Ascending aorta (tissue), 2 donors: ENCODE measurements at regions of chr1 and their contacts with region 1.

Region 1: DNA sequence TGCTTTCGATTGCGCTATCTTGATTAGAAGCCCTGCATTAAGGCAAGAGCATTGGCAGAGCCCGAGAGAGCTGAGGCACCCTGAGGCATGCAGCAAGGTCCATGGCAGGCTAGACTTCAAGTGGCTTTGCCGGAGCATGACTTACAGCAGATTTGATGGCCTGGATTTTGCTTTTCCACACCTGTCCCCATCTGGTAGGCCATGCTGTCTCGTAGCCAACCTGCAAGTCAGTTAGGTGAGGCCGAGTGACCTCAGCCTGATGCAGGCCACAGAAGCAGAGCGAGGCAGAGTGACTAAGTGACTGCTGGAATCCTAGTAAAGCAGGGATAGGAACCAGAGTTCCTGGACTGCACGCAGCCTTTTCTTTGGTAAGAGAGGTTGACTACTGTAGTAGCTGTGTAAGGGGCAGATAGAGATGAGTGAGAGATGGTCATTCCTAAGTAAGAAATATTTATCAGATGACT is 148.9 kb downstream of the PBX1 start:
- DNase-seq: peak; percentile 39 to 77
- H3K4me3 ChIP-seq: no peak overlapping the region
- H3K27ac ChIP-seq: peak overlapping the region; percentile 48 to 77
- H3K4me1 ChIP-seq: peaks cover 0 to 41% of the 10 kb centered on the region in 2 donors
- H3K27me3 ChIP-seq: no peaks in the 10 kb centered on the region
- CTCF ChIP-seq: no peak

Region 2: DNA sequence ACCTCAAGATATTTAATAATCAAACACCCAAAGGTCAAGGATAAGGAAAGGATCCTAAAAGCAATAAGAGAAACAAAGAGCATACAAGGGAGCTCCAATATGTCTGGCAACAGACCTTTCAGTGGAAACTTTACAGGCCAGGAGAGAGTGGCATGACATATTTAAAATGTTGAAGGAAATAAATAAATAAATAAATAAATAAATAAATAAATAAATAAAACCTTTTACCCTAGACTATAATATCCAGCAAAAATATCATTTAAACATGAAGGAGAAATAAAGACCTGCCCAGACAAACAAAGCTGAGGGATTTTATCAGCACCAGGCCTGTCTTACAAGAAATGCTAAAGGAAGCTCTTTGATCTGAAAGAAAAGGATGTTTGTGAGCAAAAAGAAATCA is 516.7 kb before region 1 on chr1:
- intact Hi-C with region 1: no loop called
- DNase-seq: no peak
- H3K4me3 ChIP-seq: no peak overlapping the region
- H3K27ac ChIP-seq: no peak overlapping the region
- H3K4me1 ChIP-seq: no peaks in the 10 kb centered on the region
- H3K27me3 ChIP-seq: no peaks in the 10 kb centered on the region
- CTCF ChIP-seq: no peak

Region 3: GRCh38 chr1:164644774-164645235 is 63.1 kb before region 1 on chr1:
- intact Hi-C with region 1: loop called (anchors 5 kb)
- DNase-seq: no peak
- H3K4me3 ChIP-seq: no peak overlapping the region
- H3K27ac ChIP-seq: no peak overlapping the region
- H3K4me1 ChIP-seq: peaks cover 0 to 21% of the 10 kb centered on the region in 2 donors
- H3K27me3 ChIP-seq: no peaks in the 10 kb centered on the region
- CTCF ChIP-seq: no peak

Region 4: GRCh38 chr1:164765557-164765956 is 57.7 kb after region 1 on chr1:
- intact Hi-C with region 1: loop called (anchors 5 kb)
- DNase-seq: no peak
- H3K4me3 ChIP-seq: no peak overlapping the region
- H3K27ac ChIP-seq: peak overlapping the region; percentile 74 to 82
- H3K4me1 ChIP-seq: peaks cover 0 to 30% of the 10 kb centered on the region in 2 donors
- H3K27me3 ChIP-seq: no peaks in the 10 kb centered on the region
- CTCF ChIP-seq: no peak